Left ventricle myocardium inferior (tissue), 1 donor: ENCODE measurements at regions of chr11 and their contacts with region 1.

Region 1: DNA sequence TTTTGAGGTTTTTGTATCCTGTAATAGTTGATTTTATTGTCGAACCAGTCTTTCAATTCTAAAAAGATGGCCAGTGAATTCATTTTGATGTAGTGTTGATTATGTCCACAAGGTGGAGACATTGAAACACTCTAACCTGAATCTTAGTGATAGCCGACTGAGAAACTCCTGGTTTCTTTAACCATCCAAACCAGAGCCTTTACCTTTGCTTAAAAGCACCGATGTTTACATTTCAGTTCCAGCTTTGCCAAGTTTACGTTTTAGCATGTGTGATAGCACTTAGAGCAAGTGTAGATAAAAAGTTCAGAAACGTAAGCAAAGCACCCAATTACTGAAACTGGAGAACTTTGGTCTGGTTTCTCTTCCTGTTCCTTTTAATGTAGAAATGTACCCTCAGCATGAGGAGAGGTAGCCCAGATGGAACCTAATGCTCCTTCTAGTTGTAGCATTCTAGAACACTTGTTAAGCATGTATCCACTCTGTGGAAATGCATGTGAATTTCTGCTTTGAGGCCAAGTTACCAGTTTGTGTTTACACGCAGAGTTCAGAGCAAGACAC is 208.6 kb downstream of the DBX1 start:
- DNase-seq: no peak
- H3K4me3 ChIP-seq: no peak overlapping the region
- H3K27ac ChIP-seq: peak overlapping the region; percentile 41
- H3K4me1 ChIP-seq: peaks cover 53% of the 10 kb centered on the region
- H3K27me3 ChIP-seq: no peaks in the 10 kb centered on the region
- CTCF ChIP-seq: peak; percentile 77

Region 2: GRCh38 chr11:19673924-19674729 is 277.5 kb before region 1 on chr11:
- intact Hi-C with region 1: no loop called
- DNase-seq: peak; percentile 83
- H3K4me3 ChIP-seq: no peak overlapping the region
- H3K27ac ChIP-seq: peak overlapping the region; percentile 91
- H3K4me1 ChIP-seq: peaks cover 50% of the 10 kb centered on the region
- H3K27me3 ChIP-seq: no peaks in the 10 kb centered on the region
- CTCF ChIP-seq: no peak

Region 3: GRCh38 chr11:20050551-20051333 is 99.1 kb after region 1 on chr11:
- intact Hi-C with region 1: no loop called
- DNase-seq: no peak
- H3K4me3 ChIP-seq: no peak overlapping the region
- H3K27ac ChIP-seq: peak overlapping the region; percentile 90
- H3K4me1 ChIP-seq: peaks cover 61% of the 10 kb centered on the region
- H3K27me3 ChIP-seq: no peaks in the 10 kb centered on the region
- CTCF ChIP-seq: no peak

Region 4: DNA sequence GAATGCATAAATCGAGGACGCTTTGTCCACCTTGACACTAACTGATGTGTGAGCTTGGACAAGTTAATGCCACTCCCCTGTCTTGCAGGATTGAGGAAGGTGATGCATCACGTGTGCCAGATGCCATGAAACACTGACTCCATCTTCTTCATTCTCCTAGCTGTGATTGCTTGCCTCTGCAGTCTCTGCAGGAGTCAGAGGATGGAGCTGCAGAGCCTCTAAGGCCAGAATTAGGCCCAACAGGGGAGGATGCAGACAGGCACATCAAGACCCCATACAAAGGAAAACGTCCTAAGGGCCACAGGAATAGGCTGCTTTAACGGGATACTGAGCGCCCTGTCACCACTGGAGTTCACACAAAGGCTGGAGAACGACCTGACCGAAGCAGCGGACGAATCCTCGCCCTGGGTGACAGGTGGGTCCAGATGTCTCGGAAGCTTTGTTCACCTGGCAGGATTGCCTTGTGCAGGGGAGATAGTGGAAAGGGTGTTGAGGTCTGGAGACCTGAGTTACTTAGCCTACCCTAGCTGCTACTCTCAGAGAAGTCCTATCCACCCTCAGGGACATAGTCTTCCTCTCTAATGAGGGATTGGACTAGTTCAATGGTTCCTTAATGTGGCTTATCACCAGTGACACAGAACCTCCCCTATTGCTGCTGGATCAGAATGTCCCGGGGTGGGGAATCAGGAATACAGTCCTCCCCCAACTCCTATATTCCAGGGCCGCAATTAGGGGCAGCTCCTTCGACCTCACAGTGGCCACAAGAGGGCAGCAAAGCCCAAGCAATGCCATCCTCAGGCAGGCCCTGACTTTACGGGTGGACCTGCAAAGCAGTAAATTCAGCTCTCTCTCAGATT is 176.3 kb after region 1 on chr11:
- intact Hi-C with region 1: loop called (anchors 5 kb)
- DNase-seq: peak; percentile 64
- H3K4me3 ChIP-seq: no peak overlapping the region
- H3K27ac ChIP-seq: no peak overlapping the region
- H3K4me1 ChIP-seq: peaks cover 12% of the 10 kb centered on the region
- H3K27me3 ChIP-seq: peaks cover 4% of the 10 kb centered on the region
- CTCF ChIP-seq: peak; percentile 85

Region 5: DNA sequence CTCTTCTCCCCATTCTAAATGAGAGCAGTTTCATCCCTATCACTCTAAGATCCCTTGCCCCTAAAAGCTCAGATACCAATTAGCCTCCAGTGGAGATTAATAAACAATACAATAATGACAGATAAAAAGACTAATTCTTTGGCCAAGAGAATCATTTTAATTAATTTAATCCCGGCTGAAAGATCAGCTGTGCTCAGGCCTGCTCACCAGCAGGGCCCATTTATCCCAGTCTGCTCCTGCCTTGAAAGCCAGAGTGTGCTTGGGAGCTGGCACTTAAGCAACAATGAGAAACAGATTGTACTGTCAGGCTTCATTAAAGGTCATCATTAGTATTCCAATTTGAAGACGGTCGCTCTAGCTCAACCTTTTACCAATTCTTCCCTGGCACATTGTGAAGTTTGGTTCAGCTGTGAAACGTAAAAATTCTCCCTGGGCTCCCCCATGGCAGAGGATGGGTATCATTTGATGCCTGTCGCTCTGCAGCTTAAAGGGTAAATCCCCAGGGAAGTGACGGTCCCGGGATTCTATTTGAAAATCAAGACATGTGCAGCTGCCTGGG is 375.8 kb after region 1 on chr11:
- intact Hi-C with region 1: loop called (anchors 10 kb)
- DNase-seq: no peak
- H3K4me3 ChIP-seq: no peak overlapping the region
- H3K27ac ChIP-seq: no peak overlapping the region
- H3K4me1 ChIP-seq: no peaks in the 10 kb centered on the region
- H3K27me3 ChIP-seq: peaks cover 41% of the 10 kb centered on the region
- CTCF ChIP-seq: no peak